ENCODE measurements at regions of chr9 and their contacts with region 1.

Region 1: DNA sequence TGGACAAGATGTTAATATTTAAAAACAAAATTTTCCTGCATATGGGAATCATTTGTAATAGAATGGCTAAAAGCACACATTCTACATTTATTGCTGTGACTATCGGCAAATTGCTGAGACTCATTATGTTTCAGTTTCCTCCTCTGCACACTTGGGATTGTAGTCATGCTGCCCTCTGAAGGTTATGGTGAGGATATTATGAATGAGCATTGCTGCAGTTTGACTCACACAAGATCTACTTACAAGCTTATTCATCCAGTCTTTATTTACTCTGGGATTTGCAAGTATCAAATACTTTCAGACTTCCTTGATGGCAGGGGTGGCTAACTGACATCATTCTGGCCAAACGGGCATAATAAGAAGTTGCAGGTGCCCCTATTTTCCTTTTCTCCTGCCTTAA is 9.5 kb upstream of the NFIL3 start:
- DNase-seq: peak; percentile 34
- ATAC-seq: peak; percentile 99
- H3K4me3 Mint-ChIP-seq: no peak overlapping the region
- H3K27ac Mint-ChIP-seq: no peak overlapping the region
- H3K4me1 Mint-ChIP-seq: peaks cover 10% of the 10 kb centered on the region
- H3K27me3 Mint-ChIP-seq: peaks cover 21% of the 10 kb centered on the region

Region 2: GRCh38 chr9:90985631-90986030 is 447.5 kb before region 1 on chr9:
- CTCF ChIA-PET with region 1: no interaction called
- POLR2A ChIA-PET with region 1: no interaction called
- intact Hi-C with region 1: loop called in 1 of 2 experiments (anchors 5 kb)
- DNase-seq: no peak
- ATAC-seq: no peak
- H3K4me3 Mint-ChIP-seq: no peak overlapping the region
- H3K27ac Mint-ChIP-seq: no peak overlapping the region
- H3K4me1 Mint-ChIP-seq: peaks cover 5% of the 10 kb centered on the region
- H3K27me3 Mint-ChIP-seq: peaks cover 8% of the 10 kb centered on the region

Region 3: DNA sequence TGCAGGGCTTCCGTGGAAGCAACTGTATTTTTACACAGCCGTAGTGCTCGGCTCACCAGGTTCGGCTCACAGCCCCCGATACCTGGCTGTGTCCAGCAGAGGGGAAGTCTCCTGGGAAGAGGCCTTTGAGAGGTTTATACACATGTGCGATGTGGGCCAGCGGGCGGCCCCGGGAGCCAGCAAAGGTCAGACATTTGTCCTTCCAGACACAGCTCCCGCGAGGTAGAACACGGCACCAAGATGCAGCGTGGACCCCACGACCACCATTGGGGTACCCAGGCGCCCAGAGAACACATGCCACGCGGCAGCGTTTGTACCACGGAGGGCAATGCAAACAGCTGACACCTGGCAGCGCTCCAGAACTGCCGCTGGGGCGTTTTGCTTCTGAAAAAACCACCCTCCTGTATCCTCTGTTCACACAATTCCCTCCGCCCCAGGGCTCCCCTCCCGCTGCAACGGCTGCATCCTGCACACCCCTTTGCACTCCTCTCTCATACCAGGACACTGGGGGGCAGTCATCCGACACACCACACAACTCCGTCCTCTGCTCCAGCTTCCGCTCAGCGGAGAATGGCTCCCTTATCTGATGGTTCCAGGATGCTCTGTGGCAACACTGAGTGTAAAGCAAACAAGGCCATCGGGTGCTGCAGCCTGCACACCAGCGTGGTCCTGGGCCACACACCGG is 396.2 kb before region 1 on chr9:
- CTCF ChIA-PET with region 1: interaction called, 13 read pairs
- POLR2A ChIA-PET with region 1: interaction called, 5 read pairs
- intact Hi-C with region 1: no loop called
- DNase-seq: peak; percentile 87
- ATAC-seq: peak; percentile 89
- H3K4me3 Mint-ChIP-seq: peak overlapping the region; percentile 19
- H3K27ac Mint-ChIP-seq: peak overlapping the region; percentile 86
- H3K4me1 Mint-ChIP-seq: peaks cover 52% of the 10 kb centered on the region
- H3K27me3 Mint-ChIP-seq: peaks cover 9% of the 10 kb centered on the region

Region 4: GRCh38 chr9:91681461-91682305 is 248.5 kb after region 1 on chr9:
- CTCF ChIA-PET with region 1: no interaction called
- POLR2A ChIA-PET with region 1: no interaction called
- intact Hi-C with region 1: loop called in 1 of 2 experiments (anchors 5 kb)
- DNase-seq: peak; percentile 88
- ATAC-seq: peak; percentile 96
- H3K4me3 Mint-ChIP-seq: no peak overlapping the region
- H3K27ac Mint-ChIP-seq: no peak overlapping the region
- H3K4me1 Mint-ChIP-seq: no peaks in the 10 kb centered on the region
- H3K27me3 Mint-ChIP-seq: peaks cover 14% of the 10 kb centered on the region

Region 5: GRCh38 chr9:91711755-91712601 is 278.8 kb after region 1 on chr9:
- CTCF ChIA-PET with region 1: no interaction called
- POLR2A ChIA-PET with region 1: no interaction called
- intact Hi-C with region 1: loop called in 1 of 2 experiments (anchors 2 kb)
- DNase-seq: peak; percentile 88
- ATAC-seq: peak; percentile 97
- H3K4me3 Mint-ChIP-seq: no peak overlapping the region
- H3K27ac Mint-ChIP-seq: peak overlapping the region; percentile 26
- H3K4me1 Mint-ChIP-seq: no peaks in the 10 kb centered on the region
- H3K27me3 Mint-ChIP-seq: peaks cover 24% of the 10 kb centered on the region

Region 6: GRCh38 chr9:91727316-91727861 is 294.2 kb after region 1 on chr9:
- CTCF ChIA-PET with region 1: interaction called, 3 read pairs
- POLR2A ChIA-PET with region 1: no interaction called
- intact Hi-C with region 1: loop called in 1 of 2 experiments (anchors 5 kb)
- DNase-seq: peak; percentile 64
- ATAC-seq: peak; percentile 96
- H3K4me3 Mint-ChIP-seq: no peak overlapping the region
- H3K27ac Mint-ChIP-seq: no peak overlapping the region
- H3K4me1 Mint-ChIP-seq: no peaks in the 10 kb centered on the region
- H3K27me3 Mint-ChIP-seq: peaks cover 3% of the 10 kb centered on the region

Measured in activated CD4-positive, alpha-beta T cell treated with anti-CD3 and anti-CD28 coated beads for 36 hours (primary cell).